ENCODE measurements at regions of chr15 and their contacts with region 1.

Region 1: DNA sequence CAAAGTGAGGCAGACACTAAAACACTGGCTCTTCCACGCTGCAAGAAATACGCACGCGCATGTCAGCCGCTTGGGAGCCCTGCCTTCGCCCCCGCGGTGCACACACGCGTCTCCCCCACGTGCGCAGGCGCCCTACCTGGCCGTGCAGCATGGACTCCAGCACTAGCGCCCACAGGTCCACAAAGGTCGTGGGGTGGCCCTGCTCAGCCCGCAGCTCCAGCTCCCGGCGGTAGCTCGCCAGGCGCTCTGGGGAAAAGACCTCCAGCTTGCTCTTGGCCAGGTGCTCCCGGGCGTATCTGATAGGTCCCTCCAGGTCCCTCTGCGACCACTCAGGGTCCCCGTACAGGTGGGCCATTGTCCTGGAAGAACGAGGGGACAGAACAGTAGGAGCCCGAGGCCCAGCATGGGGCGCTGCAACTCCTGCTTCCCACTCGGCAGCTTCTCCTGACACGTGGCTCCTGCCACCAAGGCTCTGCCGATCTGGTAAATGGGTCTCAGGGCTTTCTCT is 14.9 kb downstream of the PLA2G4D start:
- DNase-seq: peak in 1 of 2 experiments; percentile 57
- H3K4me3 ChIP-seq: no peak overlapping the region
- H3K27ac ChIP-seq: no peak overlapping the region
- H3K4me1 ChIP-seq: peaks cover 3 to 13% (median 11%) of the 10 kb centered on the region in 4 experiments
- H3K27me3 ChIP-seq: no peaks in the 10 kb centered on the region
- CTCF ChIP-seq: no peak
- EP300 ChIP-seq: no peak
- POLR2A ChIP-seq: no peak
- RAD21 ChIP-seq: no peak

Region 2: GRCh38 chr15:42035435-42035761 is 44.1 kb before region 1 on chr15:
- CTCF ChIA-PET with region 1: no interaction called
- POLR2A ChIA-PET with region 1: no interaction called
- DNase-seq: no peak
- H3K4me3 ChIP-seq: no peak overlapping the region
- H3K27ac ChIP-seq: no peak overlapping the region
- H3K4me1 ChIP-seq: peaks cover 2 to 4% (median 3%) of the 10 kb centered on the region in 4 experiments; a peak in 5 of 7 replicates
- H3K27me3 ChIP-seq: no peaks in the 10 kb centered on the region
- CTCF ChIP-seq: no peak
- EP300 ChIP-seq: no peak
- POLR2A ChIP-seq: no peak
- RAD21 ChIP-seq: no peak

Region 3: DNA sequence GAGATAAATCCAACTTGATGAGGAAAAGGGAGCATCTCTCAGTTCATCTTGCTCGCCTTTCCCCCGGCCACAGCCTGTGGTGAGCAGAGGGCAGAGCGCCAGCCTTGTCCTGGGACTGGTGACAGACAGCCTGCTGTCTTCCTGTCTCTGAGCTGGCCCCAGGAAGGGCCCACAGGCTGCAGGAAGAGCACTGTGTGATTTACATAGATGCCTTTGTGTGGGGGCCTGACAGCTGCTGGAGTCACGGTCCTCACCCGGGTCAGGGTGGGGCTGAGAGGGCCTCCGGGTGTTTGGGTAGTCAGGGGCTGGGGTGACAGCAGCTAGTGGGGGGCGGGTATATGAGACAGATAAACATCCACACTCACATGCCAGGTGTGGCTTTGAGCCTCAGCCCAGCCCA is 14.4 kb before region 1 on chr15:
- CTCF ChIA-PET with region 1: interaction called, 425 read pairs
- POLR2A ChIA-PET with region 1: interaction called, 6 read pairs
- DNase-seq: peak in 1 of 2 experiments; percentile 35
- H3K4me3 ChIP-seq: no peak overlapping the region
- H3K27ac ChIP-seq: no peak overlapping the region
- H3K4me1 ChIP-seq: peaks cover 0 to 2% (median 0%) of the 10 kb centered on the region in 4 experiments; a peak in 3 of 7 replicates
- H3K27me3 ChIP-seq: no peaks in the 10 kb centered on the region
- CTCF ChIP-seq: no peak
- EP300 ChIP-seq: no peak
- POLR2A ChIP-seq: no peak
- RAD21 ChIP-seq: no peak

Measured in H1 (cell line).